AG04449 (cell line): ENCODE measurements at regions of chr5 and their contacts with region 1.

Region 1: GRCh38 chr5:154445422-154446182 is at the start of gene SAP30L:
- DNase-seq: peak; percentile 52
- H3K4me3 ChIP-seq: peak within 1 kb of the TSS; percentile 95
- CTCF ChIP-seq: no peak

Region 2: DNA sequence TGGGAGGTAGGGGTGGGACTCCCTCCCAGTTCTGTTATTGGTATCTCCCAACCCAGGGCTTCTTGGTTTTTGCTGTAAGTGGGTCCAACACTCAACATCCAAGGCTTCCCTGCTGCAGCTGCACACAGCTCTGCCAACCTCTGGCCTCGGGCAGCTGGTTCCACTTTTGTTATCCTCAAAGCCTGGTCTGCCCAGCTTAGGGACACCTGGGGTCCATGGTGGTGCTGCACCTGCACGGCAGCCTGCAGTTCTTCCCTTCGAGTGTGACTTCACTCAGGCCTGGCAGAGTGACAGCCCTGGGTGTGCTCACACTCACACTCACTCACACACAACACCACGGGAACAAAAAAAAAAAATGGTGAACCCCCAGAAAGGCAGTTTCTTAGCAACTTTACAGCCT is 15.1 kb before region 1 on chr5:
- CTCF ChIA-PET with region 1: no interaction called
- POLR2A ChIA-PET with region 1: no interaction called
- DNase-seq: no peak
- H3K4me3 ChIP-seq: no peak overlapping the region
- CTCF ChIP-seq: no peak

Region 3: DNA sequence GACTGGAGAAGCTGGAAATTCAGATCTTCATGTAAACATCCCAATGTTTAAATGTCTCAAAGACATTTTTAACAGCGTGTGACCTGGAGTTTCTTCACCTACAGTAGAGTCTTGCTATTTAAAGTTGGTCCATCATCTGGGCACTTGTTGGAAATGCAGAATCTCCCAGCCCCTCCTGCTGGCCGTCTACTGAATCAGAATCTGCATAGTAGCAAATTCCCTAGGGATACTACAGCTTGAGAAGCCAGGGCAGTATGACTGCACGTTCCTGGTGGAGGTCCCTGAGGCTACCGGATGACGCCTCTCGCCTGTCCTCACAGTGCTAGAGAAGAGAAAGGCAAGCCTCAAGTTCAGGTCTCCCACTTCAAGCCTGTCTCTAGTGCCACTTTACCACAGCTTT is 15.9 kb after region 1 on chr5:
- CTCF ChIA-PET with region 1: interaction called, 44 read pairs
- POLR2A ChIA-PET with region 1: no interaction called
- DNase-seq: no peak
- H3K4me3 ChIP-seq: no peak overlapping the region
- CTCF ChIP-seq: peak; percentile 25

Region 4: GRCh38 chr5:154916884-154917283 is 471.3 kb after region 1 on chr5:
- CTCF ChIA-PET with region 1: no interaction called
- POLR2A ChIA-PET with region 1: no interaction called
- DNase-seq: no peak
- H3K4me3 ChIP-seq: no peak overlapping the region
- CTCF ChIP-seq: no peak